CD8-positive, alpha-beta memory T cell (primary cell): ENCODE measurements at regions of chr12 and their contacts with region 1.

Region 1: DNA sequence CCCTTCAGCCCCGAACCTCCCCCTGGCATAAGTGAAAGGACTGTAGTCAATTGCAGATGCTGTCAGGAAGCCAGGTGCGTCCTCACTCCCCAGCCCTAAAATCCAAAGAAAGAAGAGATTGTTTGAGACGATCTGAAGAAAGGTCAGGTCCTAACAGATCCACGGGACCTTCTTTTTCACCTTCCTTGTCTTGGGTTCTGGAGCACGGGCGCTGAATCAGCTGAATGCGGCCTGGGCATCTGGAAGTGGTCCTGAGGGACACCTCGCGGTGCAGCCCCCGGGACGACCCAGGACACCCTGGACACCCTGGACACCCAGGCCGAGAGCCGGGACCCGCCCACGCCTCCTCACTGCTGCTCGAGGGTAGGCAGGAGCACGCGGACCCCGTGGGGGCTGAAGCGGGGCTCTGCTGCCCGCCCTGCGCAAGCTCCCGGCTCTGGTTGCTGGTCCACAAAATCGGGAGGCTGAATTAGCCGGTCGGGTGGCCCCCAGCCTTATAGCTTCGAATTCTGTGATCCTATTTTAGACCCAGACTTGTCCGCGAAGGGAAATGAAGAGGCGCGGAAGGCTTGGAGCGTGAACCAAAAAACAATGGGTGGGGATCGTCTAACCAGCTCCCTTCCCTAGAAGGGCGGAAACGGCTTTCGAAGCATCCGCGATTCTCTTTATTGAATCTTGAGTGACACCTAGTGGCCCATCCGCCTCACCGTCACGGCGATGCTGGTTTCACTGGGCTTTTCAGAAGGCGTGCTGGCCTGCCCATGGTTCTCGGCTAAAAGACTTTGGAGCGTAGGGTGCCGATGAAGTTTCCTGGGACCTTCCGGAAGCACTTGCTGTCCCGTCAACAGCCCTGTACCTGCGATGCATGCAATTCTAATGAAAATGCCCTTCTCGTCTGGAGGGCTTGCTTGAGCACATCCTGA is 46.4 kb upstream of the PLXNC1 start:
- DNase-seq: peak; percentile 69 to 86 (median 76)
- H3K4me3 ChIP-seq: peak overlapping the region; percentile 57
- H3K4me3 Mint-ChIP-seq: peak overlapping the region; percentile 86 to 94 (median 88)
- H3K27ac ChIP-seq: peak overlapping the region; percentile 19
- H3K27ac Mint-ChIP-seq: peak overlapping the region in 7 of 8 donors; percentile 17 to 90 (median 70)
- H3K4me1 ChIP-seq: peaks cover 9% of the 10 kb centered on the region
- H3K4me1 Mint-ChIP-seq: peaks cover 5 to 12% (median 10%) of the 10 kb centered on the region in 3 donors
- H3K27me3 ChIP-seq: no peaks in the 10 kb centered on the region
- H3K27me3 Mint-ChIP-seq: peaks cover 23 to 44% of the 10 kb centered on the region in 2 donors

Region 2: DNA sequence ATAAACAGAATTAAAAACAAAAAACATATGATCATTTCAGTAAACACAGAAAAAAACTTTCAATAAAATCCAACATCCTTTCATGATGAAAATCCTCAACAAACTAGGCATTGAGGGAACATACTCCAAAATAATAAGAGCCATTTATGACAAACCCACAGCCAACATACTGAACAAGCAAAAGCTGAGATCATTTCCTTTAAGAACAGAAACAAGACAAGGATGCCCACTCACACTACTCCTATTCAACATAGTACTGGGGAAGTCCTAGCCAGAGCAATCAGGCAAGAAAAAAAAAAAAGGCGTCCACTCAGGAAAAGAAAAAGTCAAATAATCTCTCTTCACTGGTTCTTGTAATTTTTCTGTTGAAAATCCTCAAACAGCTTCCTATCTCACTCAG is 604.5 kb before region 1 on chr12:
- CTCF ChIA-PET with region 1: interaction called, 254 read pairs
- POLR2A ChIA-PET with region 1: interaction called, 11 read pairs
- DNase-seq: no peak
- H3K4me3 ChIP-seq: no peak overlapping the region
- H3K4me3 Mint-ChIP-seq: no peak overlapping the region
- H3K27ac ChIP-seq: no peak overlapping the region
- H3K27ac Mint-ChIP-seq: peak overlapping the region in 2 of 8 donors; percentile 13 to 63
- H3K4me1 ChIP-seq: no peaks in the 10 kb centered on the region
- H3K4me1 Mint-ChIP-seq: no peaks in the 10 kb centered on the region
- H3K27me3 ChIP-seq: no peaks in the 10 kb centered on the region
- H3K27me3 Mint-ChIP-seq: no peaks in the 10 kb centered on the region

Region 3: GRCh38 chr12:93514853-93515252 is 587.1 kb before region 1 on chr12:
- CTCF ChIA-PET with region 1: interaction called, 26 read pairs
- POLR2A ChIA-PET with region 1: no interaction called
- DNase-seq: no peak
- H3K4me3 ChIP-seq: no peak overlapping the region
- H3K4me3 Mint-ChIP-seq: no peak overlapping the region
- H3K27ac ChIP-seq: no peak overlapping the region
- H3K27ac Mint-ChIP-seq: no peak overlapping the region
- H3K4me1 ChIP-seq: no peaks in the 10 kb centered on the region
- H3K4me1 Mint-ChIP-seq: no peaks in the 10 kb centered on the region
- H3K27me3 ChIP-seq: no peaks in the 10 kb centered on the region
- H3K27me3 Mint-ChIP-seq: no peaks in the 10 kb centered on the region

Region 4: DNA sequence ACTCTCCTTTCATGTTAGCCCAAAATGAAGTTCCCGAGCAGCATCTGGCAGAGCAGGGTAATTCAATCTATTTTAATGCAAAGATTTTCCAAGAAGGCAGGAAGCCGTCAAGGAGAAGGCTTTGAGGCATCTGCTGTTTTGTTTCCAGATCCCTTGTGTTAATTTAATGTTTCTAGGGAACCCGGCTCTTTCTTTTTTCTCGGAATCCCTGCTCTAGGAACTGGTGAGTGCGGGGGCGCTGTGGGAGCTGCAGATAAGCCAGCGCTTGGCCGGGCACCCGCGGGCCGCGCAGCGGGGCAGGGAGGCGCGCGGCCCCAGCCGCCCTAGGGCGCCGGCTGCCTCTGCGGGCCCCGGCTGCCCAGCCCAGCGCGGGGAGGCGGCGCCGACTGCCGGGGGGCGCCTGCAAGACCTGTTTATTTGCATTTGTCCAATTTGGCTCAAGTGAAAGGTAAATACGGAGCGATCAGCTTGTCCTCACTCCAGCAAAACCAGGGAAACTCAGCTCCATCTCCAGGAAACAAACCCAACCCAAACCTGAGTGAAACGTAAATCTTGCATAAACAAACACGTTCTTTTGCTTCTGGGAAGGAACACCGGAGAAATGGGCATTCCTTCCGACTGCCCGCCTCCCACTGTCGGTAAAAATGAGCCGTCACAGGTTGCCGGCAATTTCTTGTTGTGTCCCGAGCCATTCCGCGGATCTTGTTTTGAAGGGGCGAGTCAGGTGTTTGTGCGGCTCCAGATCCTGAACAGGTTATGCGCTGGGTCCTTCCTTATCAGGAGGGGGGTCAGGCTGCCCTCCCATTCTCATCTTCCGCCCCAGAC is 359.7 kb before region 1 on chr12:
- CTCF ChIA-PET with region 1: interaction called, 14 read pairs
- POLR2A ChIA-PET with region 1: no interaction called
- DNase-seq: peak; percentile 12 to 56 (median 42)
- H3K4me3 ChIP-seq: peak overlapping the region; percentile 72
- H3K4me3 Mint-ChIP-seq: peak overlapping the region; percentile 87 to 94 (median 90)
- H3K27ac ChIP-seq: peak overlapping the region; percentile 76
- H3K27ac Mint-ChIP-seq: peak overlapping the region; percentile 41 to 91 (median 82)
- H3K4me1 ChIP-seq: peaks cover 30% of the 10 kb centered on the region
- H3K4me1 Mint-ChIP-seq: peaks cover 27 to 41% (median 37%) of the 10 kb centered on the region in 3 donors
- H3K27me3 ChIP-seq: no peaks in the 10 kb centered on the region
- H3K27me3 Mint-ChIP-seq: peaks cover 0 to 2% of the 10 kb centered on the region in 2 donors

Region 5: DNA sequence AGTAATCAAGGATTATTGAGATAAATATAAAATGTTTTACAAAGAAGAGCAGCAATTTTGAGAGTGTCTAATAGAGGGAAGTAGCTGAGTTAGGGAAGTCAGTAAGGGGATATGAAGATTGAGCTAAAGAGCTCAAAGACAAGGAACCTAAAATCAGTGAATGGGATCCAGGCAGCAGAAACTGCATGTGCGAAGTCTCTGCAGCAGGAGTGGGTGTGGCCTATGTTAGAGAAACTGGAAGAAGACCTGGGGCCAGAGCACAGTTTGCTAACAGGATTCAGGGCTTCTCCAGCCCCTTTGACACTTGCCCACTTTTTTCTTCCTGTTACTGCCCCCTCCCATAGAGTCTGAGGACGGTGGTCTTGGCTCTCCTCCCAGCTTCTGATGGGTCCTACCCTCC is 10.1 kb after region 1 on chr12:
- CTCF ChIA-PET with region 1: interaction called, 18 read pairs
- POLR2A ChIA-PET with region 1: no interaction called
- DNase-seq: no peak
- H3K4me3 ChIP-seq: no peak overlapping the region
- H3K4me3 Mint-ChIP-seq: no peak overlapping the region
- H3K27ac ChIP-seq: no peak overlapping the region
- H3K27ac Mint-ChIP-seq: no peak overlapping the region
- H3K4me1 ChIP-seq: no peaks in the 10 kb centered on the region
- H3K4me1 Mint-ChIP-seq: no peaks in the 10 kb centered on the region
- H3K27me3 ChIP-seq: no peaks in the 10 kb centered on the region
- H3K27me3 Mint-ChIP-seq: peaks cover 9 to 26% of the 10 kb centered on the region in 2 donors